ENCODE measurements at regions of chr16 and their contacts with region 1.

Region 1: GRCh38 chr16:69482410-69482991 is 58.1 kb downstream of the CYB5B start:
- DNase-seq: peak; percentile 85 to 93 (median 89)
- ATAC-seq: peak; percentile 89 to 93
- H3K4me3 ChIP-seq: no peak overlapping the region
- H3K27ac ChIP-seq: peak overlapping the region; percentile 92
- H3K4me1 ChIP-seq: peaks cover under 1% of the 10 kb centered on the region
- H3K27me3 ChIP-seq: no peaks in the 10 kb centered on the region

Region 2: DNA sequence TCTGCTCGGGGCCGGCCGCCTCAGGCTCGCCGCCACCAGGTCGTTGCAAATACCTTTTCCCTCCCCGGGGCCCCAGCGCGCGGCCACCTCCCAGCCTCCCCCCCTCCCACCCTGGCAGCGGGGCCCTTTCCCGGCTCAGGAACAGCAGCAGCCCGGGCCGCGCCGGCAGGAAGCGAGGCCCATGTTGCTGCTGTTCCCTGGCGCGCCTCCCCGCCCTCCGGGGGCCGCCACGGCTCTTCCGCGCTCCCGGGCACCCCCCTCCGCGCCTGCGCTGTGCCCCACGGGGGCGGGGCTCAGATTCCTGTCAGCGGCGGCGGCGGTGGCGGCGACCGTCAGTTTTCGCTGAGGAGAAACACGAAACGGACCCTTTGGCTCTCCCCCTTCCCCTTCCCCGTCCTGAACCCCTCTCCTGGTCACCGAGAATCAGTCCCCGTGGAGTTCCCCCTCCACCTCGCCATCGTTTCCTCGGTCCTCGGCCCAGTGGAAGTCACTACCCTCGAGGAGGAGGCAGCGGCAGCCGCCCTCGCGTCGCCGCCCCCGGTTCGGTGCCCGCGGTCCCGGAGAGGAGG is 83.3 kb after region 1 on chr16 and contains the start of gene NFAT5:
- intact Hi-C with region 1: loop called in 1 of 4 experiments (anchors 10 kb)
- DNase-seq: peak; percentile 85 to 95 (median 95)
- ATAC-seq: peak; percentile 92 to 94
- H3K4me3 ChIP-seq: peak within 1 kb of the TSS; percentile 85
- H3K27ac ChIP-seq: peak within 1 kb of the TSS; percentile 96
- H3K4me1 ChIP-seq: peaks cover 5% of the 10 kb centered on the region
- H3K27me3 ChIP-seq: no peaks in the 10 kb centered on the region
- total RNA-seq, gene NFAT5: 17.7 to 28.5 (median 23.5) TPM

Measured in right cardiac atrium (tissue), 5 donors.